ENCODE measurements at regions of chr1 and their contacts with region 1.

Region 1: DNA sequence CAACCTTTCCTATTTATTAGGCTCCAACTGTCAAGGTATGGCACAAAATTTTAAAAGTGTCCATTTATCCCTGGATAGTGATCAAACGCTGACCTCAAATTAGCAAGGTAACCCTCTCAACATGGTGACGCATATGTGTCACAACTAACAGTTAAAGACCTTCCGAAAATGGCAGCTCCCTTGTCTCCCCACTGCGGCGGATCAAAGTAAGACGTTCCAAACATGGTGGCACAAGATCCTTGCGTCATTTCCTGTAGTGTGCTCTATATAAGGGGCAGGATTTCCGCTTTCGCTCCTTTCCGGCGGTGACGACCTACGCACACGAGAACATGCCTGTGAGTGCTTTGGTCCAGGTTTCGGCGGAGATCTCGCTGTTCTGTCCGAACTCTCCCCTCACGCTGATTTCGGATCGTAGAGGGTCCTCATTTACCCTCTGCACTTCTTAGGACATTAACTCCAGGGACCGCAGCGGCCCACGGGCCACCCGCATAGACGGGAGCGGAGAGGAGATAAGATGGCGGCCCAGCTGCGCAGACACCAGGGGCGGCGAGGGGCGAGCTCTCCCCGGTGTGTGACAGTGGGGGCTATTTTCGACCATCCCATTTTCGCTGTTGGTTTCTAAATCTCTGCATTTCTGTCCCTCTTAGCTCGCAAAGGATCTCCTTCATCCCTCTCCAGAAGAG is at the start of gene RPS27:
- DNase-seq: peak; percentile 74 to 97
- ATAC-seq: peak; percentile 81 to 91 (median 86)
- H3K4me3 ChIP-seq: peak within 1 kb of the TSS; percentile 67 to 90 (median 81)
- H3K27ac ChIP-seq: peak within 1 kb of the TSS; percentile 84 to 98 (median 92)
- H3K4me1 ChIP-seq: peaks cover 4 to 59% (median 39%) of the 10 kb centered on the region in 9 donors
- H3K27me3 ChIP-seq: no peaks in the 10 kb centered on the region
- CTCF ChIP-seq: peak in 1 of 9 donors; percentile 12
- total RNA-seq, gene RPS27: 586 to 1,105 (median 715) TPM

Region 2: GRCh38 chr1:153510984-153511410 is 479.6 kb before region 1 on chr1:
- intact Hi-C with region 1: loop called in 2 of 10 experiments (anchors 5 kb)
- DNase-seq: peak; percentile 80 to 85
- ATAC-seq: peak; percentile 41 to 73 (median 64)
- H3K4me3 ChIP-seq: no peak overlapping the region
- H3K27ac ChIP-seq: no peak overlapping the region
- H3K4me1 ChIP-seq: peaks cover 9 to 38% (median 21%) of the 10 kb centered on the region in 9 donors
- H3K27me3 ChIP-seq: no peaks in the 10 kb centered on the region
- CTCF ChIP-seq: peak; percentile 82 to 99 (median 95)

Region 3: GRCh38 chr1:153677718-153678505 is 312.7 kb before region 1 on chr1:
- intact Hi-C with region 1: loop called (anchors 1 to 10 kb)
- DNase-seq: peak; percentile 40 to 54
- ATAC-seq: peak; percentile 52 to 87 (median 76)
- H3K4me3 ChIP-seq: peak overlapping the region; percentile 48 to 73 (median 66)
- H3K27ac ChIP-seq: peak overlapping the region; percentile 44 to 85 (median 78)
- H3K4me1 ChIP-seq: peaks cover 8 to 28% (median 22%) of the 10 kb centered on the region in 9 donors
- H3K27me3 ChIP-seq: peaks cover 9 to 41% (median 19%) of the 10 kb centered on the region in 7 donors
- CTCF ChIP-seq: peak; percentile 79 to 96 (median 93)

Region 4: DNA sequence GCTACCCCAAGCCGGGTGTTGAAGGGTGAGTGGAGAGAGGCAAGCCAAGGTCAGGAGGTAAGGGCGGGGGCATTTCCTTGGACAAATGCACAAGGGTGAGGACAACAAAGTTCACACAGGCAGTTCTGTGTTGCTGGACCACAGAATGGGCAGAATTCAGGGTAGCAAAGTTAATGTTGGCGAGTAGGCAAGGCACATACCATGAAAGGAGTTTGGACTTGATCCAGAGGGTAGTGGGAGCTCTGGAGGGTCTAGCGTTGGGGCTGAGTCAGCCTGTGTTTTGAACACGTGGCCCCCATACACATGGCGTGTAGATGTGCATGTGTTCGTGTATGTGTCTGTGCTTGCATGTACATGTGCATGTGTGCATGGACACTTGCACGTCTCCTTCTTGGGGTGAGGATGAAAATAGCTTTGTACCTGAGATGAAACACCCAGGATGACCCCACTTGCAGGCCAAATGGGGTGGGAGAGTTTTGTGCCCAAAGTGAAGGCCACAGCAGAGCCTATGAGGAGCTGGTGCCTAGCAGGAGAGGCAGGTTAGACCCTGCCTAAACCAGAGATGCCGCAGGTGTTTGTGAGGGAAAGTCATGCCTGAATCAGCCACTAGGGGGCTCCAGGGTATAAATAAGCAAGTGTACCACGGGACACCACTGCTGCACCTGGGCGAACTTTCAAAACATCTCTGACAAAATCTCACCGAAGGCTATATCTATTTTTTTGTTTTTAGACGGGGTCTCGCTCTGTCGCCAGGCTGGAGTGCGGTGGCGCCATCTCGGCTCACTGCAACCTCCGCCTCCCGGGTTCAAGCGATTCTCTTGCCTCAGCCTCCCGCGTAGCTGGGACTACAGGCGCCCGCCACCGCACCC is 193.6 kb before region 1 on chr1:
- intact Hi-C with region 1: loop called in 8 of 10 experiments (anchors 1 to 5 kb)
- DNase-seq: peak; percentile 53 to 84
- ATAC-seq: peak in 7 of 8 donors; percentile 51 to 76 (median 69)
- H3K4me3 ChIP-seq: no peak overlapping the region
- H3K27ac ChIP-seq: no peak overlapping the region
- H3K4me1 ChIP-seq: peaks cover 0 to 15% (median 0%) of the 10 kb centered on the region in 9 donors
- H3K27me3 ChIP-seq: no peaks in the 10 kb centered on the region
- CTCF ChIP-seq: peak; percentile 83 to 96 (median 92)

Region 5: DNA sequence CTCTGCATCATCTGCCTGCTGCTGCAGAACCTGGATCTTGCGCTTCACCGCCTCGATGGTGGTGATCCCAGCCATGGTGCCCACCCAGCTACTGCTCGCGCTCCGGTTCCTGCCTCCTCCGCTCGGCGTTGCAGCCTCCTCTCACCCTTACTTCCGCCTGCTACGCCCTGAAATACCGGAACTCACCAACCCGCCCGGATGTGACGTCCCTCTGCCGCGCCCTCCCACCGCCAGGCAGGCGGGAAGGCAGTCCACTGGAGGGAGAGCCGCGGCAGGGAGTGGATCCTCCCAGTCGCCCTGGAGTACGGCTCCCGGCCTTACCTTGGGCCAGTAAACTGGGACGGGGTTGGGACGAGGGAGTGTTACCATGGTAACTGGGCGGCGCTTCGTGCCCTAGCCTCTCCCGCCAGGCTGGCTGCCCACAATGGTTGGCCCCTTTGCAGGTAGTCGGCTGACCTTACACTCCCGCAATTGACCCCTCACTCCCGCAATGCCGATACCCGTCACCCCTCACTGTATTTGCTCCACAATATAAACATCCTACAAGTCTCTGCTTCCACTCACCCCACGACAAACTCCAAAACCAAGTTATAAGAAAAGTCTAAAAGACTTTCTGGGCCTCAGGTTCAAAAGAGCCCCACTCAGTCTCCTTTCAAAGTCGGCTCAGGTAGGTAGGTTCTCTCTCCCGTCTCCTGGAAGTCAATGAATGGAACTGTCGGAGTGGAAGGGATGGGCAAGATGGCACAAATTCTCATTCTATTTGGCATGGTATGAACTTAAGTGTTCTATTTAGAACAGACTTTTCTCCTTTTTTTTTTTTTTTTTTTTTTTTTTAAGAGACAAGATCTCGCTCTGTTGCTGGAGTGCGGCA is 192.7 kb after region 1 on chr1:
- intact Hi-C with region 1: loop called in 2 of 10 experiments (anchors 5 to 10 kb)
- DNase-seq: peak; percentile 95 to 96
- ATAC-seq: peak; percentile 96 to 98 (median 98)
- H3K4me3 ChIP-seq: peak overlapping the region; percentile 66 to 95 (median 80)
- H3K27ac ChIP-seq: peak overlapping the region; percentile 26 to 95 (median 89)
- H3K4me1 ChIP-seq: peaks cover 10 to 47% (median 44%) of the 10 kb centered on the region in 9 donors
- H3K27me3 ChIP-seq: no peaks in the 10 kb centered on the region
- CTCF ChIP-seq: peak in 4 of 9 donors; percentile 22 to 40 (median 34)

Region 6: GRCh38 chr1:154272217-154272998 is 281.8 kb after region 1 on chr1 and contains the start of gene HAX1:
- intact Hi-C with region 1: loop called in 3 of 10 experiments (anchors 5 to 10 kb)
- DNase-seq: peak; percentile 90 to 95
- ATAC-seq: peak; percentile 91 to 96 (median 93)
- H3K4me3 ChIP-seq: peak within 1 kb of the TSS; percentile 59 to 96 (median 80)
- H3K27ac ChIP-seq: peak within 1 kb of the TSS; percentile 57 to 97 (median 90)
- H3K4me1 ChIP-seq: peaks cover 3 to 21% (median 12%) of the 10 kb centered on the region in 9 donors
- H3K27me3 ChIP-seq: no peaks in the 10 kb centered on the region
- CTCF ChIP-seq: peak; percentile 62 to 93 (median 79)
- total RNA-seq, gene HAX1: 162 to 196 (median 171) TPM

Region 7: DNA sequence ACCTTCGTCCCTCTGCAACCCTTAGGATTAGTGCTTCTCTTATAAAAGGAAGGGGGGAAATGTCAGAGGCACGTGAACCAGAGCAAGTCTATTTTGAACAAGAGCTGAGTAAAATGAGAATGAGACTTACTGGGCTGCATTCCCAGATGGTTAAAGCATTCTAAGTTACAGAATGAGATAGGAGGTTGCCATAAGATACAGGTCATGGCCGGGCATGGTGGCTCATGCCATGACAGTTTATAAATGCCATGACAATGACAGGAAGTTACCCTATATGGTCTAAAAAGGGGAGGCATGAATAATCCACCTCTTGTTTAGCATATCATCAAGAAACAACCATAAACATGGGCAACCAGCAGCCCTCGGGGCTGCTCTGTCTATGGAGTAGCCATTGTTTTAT is 327.8 kb after region 1 on chr1:
- intact Hi-C with region 1: no loop called
- DNase-seq: no peak
- ATAC-seq: no peak
- H3K4me3 ChIP-seq: no peak overlapping the region
- H3K27ac ChIP-seq: no peak overlapping the region
- H3K4me1 ChIP-seq: peaks cover 0 to 10% (median 7%) of the 10 kb centered on the region in 9 donors
- H3K27me3 ChIP-seq: no peaks in the 10 kb centered on the region
- CTCF ChIP-seq: no peak

Measured in heart right ventricle (tissue), 16 donors.